Caco-2 (cell line): ENCODE measurements at regions of chr19 and their contacts with region 1.

Region 1: DNA sequence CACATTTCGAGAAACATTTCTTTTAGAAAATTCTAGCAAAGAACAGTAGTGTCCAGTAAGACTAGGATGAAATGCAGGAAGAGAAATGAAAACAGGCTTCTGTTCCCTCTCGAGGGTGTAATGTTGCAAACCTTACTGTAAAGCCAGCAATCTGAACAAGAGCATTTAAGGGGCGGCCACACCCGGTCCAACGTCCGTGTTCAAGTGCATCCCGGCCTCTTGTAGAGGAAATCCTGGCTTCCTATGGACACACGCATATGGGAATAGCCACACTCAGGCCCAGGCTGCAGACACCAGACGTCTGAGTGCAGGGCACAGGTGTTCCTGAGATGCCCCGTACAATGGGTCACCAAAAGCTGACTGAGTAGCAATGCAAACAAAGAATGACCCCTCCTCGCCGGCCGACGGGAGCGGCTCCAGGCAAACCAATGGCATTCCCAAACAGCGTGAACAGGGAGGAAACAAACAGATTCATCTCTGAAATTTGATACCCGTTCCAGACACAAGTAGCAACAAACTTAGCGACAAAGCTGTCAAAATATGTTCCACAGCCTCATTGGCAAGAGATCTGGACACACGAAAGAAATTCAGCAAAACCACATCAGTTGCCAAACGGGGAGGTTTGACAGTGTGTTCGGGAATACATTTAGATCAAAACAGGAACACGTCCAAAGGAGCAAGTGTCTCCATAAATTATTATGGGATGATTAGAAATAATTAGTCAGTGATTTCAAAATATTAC is 278.6 kb upstream of the TSHZ3 start:
- DNase-seq: no peak
- H3K4me3 ChIP-seq: no peak overlapping the region
- H3K4me3 Mint-ChIP-seq: no peak overlapping the region
- H3K27ac Mint-ChIP-seq: no peak overlapping the region
- H3K4me1 ChIP-seq: no peaks in the 10 kb centered on the region
- H3K4me1 Mint-ChIP-seq: no peaks in the 10 kb centered on the region
- H3K27me3 ChIP-seq: no peaks in the 10 kb centered on the region
- H3K27me3 Mint-ChIP-seq: peaks cover 7% of the 10 kb centered on the region
- CTCF ChIP-seq: no peak

Region 2: GRCh38 chr19:31291691-31292090 is 336.1 kb before region 1 on chr19:
- CTCF ChIA-PET with region 1: interaction called, 10 read pairs
- POLR2A ChIA-PET with region 1: no interaction called
- intact Hi-C with region 1: no loop called
- DNase-seq: peak in 1 of 2 experiments; percentile 2
- H3K4me3 ChIP-seq: no peak overlapping the region
- H3K4me3 Mint-ChIP-seq: no peak overlapping the region
- H3K27ac Mint-ChIP-seq: no peak overlapping the region
- H3K4me1 ChIP-seq: no peaks in the 10 kb centered on the region
- H3K4me1 Mint-ChIP-seq: no peaks in the 10 kb centered on the region
- H3K27me3 ChIP-seq: no peaks in the 10 kb centered on the region
- H3K27me3 Mint-ChIP-seq: peaks cover 4% of the 10 kb centered on the region
- CTCF ChIP-seq: no peak

Region 3: DNA sequence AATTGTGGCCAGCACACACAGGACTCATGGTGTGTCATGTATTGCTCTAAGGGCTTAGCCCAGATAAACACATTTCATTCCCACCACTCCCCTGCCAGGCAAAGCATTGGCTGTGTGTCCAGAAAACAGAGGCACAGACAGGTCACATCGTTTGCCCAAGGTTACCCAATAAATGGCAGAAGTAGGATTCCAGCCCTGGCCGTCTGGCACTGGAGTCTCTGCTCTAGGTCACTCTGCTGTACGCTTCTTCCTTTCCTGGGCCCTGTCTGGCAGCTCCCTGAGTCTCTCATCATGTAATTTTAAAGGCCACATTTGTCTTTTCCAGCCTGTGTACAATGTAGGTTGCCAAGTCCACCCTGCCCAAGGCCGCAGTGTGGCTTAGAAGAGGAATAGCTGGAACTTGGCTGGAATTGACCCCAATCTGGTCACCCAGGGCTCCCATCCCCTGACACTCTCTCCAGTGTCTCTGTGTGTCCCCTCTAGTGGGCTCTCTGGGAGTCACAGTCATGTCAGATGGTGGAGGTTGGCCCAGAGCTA is 14.0 kb before region 1 on chr19:
- CTCF ChIA-PET with region 1: no interaction called
- POLR2A ChIA-PET with region 1: no interaction called
- intact Hi-C with region 1: no loop called
- DNase-seq: no peak
- H3K4me3 ChIP-seq: no peak overlapping the region
- H3K4me3 Mint-ChIP-seq: no peak overlapping the region
- H3K27ac Mint-ChIP-seq: no peak overlapping the region
- H3K4me1 ChIP-seq: no peaks in the 10 kb centered on the region
- H3K4me1 Mint-ChIP-seq: no peaks in the 10 kb centered on the region
- H3K27me3 ChIP-seq: no peaks in the 10 kb centered on the region; the same call in 1 of the 2 replicates
- H3K27me3 Mint-ChIP-seq: peaks cover 9% of the 10 kb centered on the region
- CTCF ChIP-seq: no peak